Activated CD4-positive, alpha-beta T cell treated with anti-CD3 and anti-CD28 coated beads for 36 hours (primary cell): ENCODE measurements at regions of chr6 and their contacts with region 1.

Region 1: GRCh38 chr6:138012682-138013081 is 94.5 kb downstream of the PERP start:
- DNase-seq: no peak
- ATAC-seq: no peak
- H3K4me3 Mint-ChIP-seq: no peak overlapping the region
- H3K27ac Mint-ChIP-seq: no peak overlapping the region
- H3K4me1 Mint-ChIP-seq: no peaks in the 10 kb centered on the region
- H3K27me3 Mint-ChIP-seq: no peaks in the 10 kb centered on the region

Region 2: DNA sequence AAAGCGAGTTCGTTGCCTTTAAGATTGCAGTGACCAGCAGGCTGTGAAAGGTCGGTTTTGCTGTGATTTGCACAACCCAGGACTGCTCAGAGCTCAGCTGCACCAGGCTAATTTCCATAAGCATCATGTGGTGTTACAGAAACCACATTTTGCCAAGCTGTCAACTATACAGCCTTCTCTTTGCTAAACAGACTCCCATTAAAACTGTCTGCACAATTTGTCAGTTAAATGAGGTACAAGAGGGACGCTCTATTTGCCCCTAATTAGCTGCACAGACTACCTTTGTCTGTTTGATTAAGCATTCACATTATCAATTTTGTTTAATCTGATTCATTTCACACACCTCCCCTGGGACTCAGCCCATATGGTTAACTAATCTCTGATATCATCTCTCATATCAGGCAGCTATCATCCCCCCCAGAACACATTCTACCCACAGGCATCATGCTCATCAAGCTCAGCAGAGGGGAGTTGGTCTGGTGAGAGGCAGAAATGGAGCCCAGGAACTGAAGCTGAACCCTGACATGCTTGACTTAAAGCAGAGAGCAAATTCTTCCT is 580.5 kb before region 1 on chr6:
- CTCF ChIA-PET with region 1: no interaction called
- POLR2A ChIA-PET with region 1: no interaction called
- intact Hi-C with region 1: loop called in 1 of 2 experiments (anchors 10 kb)
- DNase-seq: no peak
- ATAC-seq: no peak
- H3K4me3 Mint-ChIP-seq: no peak overlapping the region
- H3K27ac Mint-ChIP-seq: no peak overlapping the region
- H3K4me1 Mint-ChIP-seq: no peaks in the 10 kb centered on the region
- H3K27me3 Mint-ChIP-seq: peaks cover 1% of the 10 kb centered on the region